ENCODE measurements at regions of chr11 and their contacts with region 1.

Region 1: DNA sequence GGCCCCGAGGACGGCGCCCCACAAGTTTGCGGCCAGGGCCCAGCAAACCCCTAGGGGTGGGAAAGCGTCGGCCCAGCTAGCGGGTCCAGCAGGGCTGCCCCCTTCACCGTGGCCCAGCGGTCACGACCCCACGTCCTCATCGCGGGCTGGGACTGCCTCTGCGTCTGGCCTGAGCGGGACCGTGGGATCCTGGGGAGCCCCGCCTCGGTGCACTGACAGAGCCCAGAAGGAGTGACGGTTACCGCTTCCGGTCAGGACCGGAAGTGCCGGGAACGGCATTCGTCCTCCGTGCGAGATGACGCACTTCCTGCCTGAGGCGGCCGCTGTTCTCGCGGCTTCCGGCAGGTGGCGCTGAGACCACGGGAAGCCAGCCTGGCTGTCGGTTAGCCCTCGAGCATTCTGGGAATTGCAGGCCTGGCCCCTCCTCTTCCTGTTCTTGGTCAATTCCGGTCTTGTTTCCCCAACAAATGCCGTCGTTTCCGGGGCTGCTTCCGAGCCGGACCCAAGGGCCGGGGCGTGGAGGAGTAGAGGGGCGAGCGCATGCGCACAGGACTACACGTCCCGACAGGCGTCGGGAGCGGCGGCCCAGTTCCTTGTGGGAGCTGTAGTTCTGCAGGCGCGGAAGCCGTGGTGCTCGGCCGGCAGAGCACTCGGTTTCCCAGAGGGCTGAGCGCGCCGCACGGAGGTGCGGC is at the start of gene TSSC4:
- DNase-seq: peak; percentile 100
- ATAC-seq: peak; percentile 85
- H3K4me3 ChIP-seq: peak within 1 kb of the TSS; percentile 100
- H3K27ac ChIP-seq: peak within 1 kb of the TSS; percentile 83
- H3K4me1 ChIP-seq: peaks cover 16 to 27% of the 10 kb centered on the region in 2 experiments
- H3K27me3 ChIP-seq: no peaks in the 10 kb centered on the region
- CTCF ChIP-seq: peak in 2 of 3 experiments; percentile 94 to 96; a peak in 4 of 6 replicates
- POLR2A ChIP-seq: peak; percentile 32
- RAD21 ChIP-seq: no peak
- total RNA-seq, gene TSSC4: 47.1 TPM

Region 2: GRCh38 chr11:2180775-2181370 is 219.3 kb before region 1 on chr11:
- CTCF ChIA-PET with region 1: no interaction called
- POLR2A ChIA-PET with region 1: no interaction called
- RAD21 ChIA-PET with region 1: no interaction called
- intact Hi-C with region 1: loop called (anchors 5 kb)
- DNase-seq: no peak
- ATAC-seq: peak; percentile 35
- H3K4me3 ChIP-seq: peak overlapping the region; percentile 17 to 45
- H3K27ac ChIP-seq: peak overlapping the region; percentile 12; the same call in 1 of the 2 replicates
- H3K4me1 ChIP-seq: peaks cover 30 to 55% of the 10 kb centered on the region in 2 experiments
- H3K27me3 ChIP-seq: no peaks in the 10 kb centered on the region
- CTCF ChIP-seq: no peak
- POLR2A ChIP-seq: no peak
- RAD21 ChIP-seq: no peak

Region 3: GRCh38 chr11:2196970-2197770 is 203.0 kb before region 1 on chr11:
- CTCF ChIA-PET with region 1: no interaction called
- POLR2A ChIA-PET with region 1: no interaction called
- RAD21 ChIA-PET with region 1: interaction called in 1 of 2 experiments, 9 read pairs
- intact Hi-C with region 1: loop called (anchors 5 kb)
- DNase-seq: peak; percentile 54
- ATAC-seq: peak; percentile 90
- H3K4me3 ChIP-seq: no peak overlapping the region
- H3K27ac ChIP-seq: no peak overlapping the region; the same call in 1 of the 2 replicates
- H3K4me1 ChIP-seq: peaks cover 5 to 20% of the 10 kb centered on the region in 2 experiments; a peak in 3 of 4 replicates
- H3K27me3 ChIP-seq: no peaks in the 10 kb centered on the region
- CTCF ChIP-seq: peak; percentile 85 to 97 (median 97)
- POLR2A ChIP-seq: no peak
- RAD21 ChIP-seq: peak; percentile 98

Region 4: GRCh38 chr11:2305140-2305840 is 94.9 kb before region 1 on chr11:
- CTCF ChIA-PET with region 1: interaction called, 20 read pairs
- POLR2A ChIA-PET with region 1: no interaction called
- RAD21 ChIA-PET with region 1: interaction called, 3 to 7 read pairs
- intact Hi-C with region 1: loop called (anchors 5 kb)
- DNase-seq: no peak
- ATAC-seq: peak; percentile 90
- H3K4me3 ChIP-seq: no peak overlapping the region
- H3K27ac ChIP-seq: no peak overlapping the region; the same call in 1 of the 2 replicates
- H3K4me1 ChIP-seq: no peaks in the 10 kb centered on the region
- H3K27me3 ChIP-seq: no peaks in the 10 kb centered on the region
- CTCF ChIP-seq: peak; percentile 84 to 92 (median 90)
- POLR2A ChIP-seq: no peak
- RAD21 ChIP-seq: peak; percentile 95